Naive thymus-derived CD4-positive, alpha-beta T cell (primary cell): ENCODE measurements at regions of chr12 and their contacts with region 1.

Region 1: DNA sequence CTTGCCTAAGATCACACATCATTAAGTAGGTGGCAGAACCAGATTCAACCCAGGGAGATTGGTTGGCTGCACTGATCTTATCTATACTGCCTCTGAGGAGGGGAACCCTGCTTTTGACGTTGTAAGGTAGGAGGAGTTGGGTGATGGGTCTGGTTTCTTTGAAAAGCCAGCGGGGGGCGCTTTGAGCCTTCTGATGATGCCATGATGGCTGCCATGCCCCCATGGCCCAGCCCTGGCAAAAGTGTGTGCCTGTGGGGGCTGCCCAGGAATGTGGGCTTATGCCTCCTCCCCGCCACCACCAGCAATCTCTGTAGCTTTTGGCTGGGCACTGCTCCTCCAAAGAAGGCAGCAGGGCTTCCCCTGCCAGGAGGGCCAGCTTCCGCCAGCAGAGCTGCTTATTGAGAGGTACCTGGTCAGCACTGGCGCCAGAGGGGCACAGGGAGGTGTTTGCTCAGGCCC is 224.3 kb downstream of the SLC41A2 start:
- DNase-seq: no peak
- ATAC-seq: peak; percentile 58
- H3K4me3 ChIP-seq: no peak overlapping the region
- H3K4me3 Mint-ChIP-seq: no peak overlapping the region
- H3K27ac ChIP-seq: no peak overlapping the region
- H3K27ac Mint-ChIP-seq: peak overlapping the region in 2 of 9 donors; percentile 16 to 65
- H3K4me1 ChIP-seq: peaks cover 19 to 38% of the 10 kb centered on the region in 2 donors
- H3K4me1 Mint-ChIP-seq: peaks cover 45 to 71% (median 60%) of the 10 kb centered on the region in 7 donors
- H3K27me3 ChIP-seq: no peaks in the 10 kb centered on the region
- H3K27me3 Mint-ChIP-seq: no peaks in the 10 kb centered on the region

Region 2: GRCh38 chr12:104769144-104769561 is 35.4 kb after region 1 on chr12:
- CTCF ChIA-PET with region 1: no interaction called
- POLR2A ChIA-PET with region 1: no interaction called
- intact Hi-C with region 1: loop called in 1 of 2 experiments (anchors 2 kb)
- DNase-seq: no peak
- ATAC-seq: no peak
- H3K4me3 ChIP-seq: no peak overlapping the region
- H3K4me3 Mint-ChIP-seq: no peak overlapping the region
- H3K27ac ChIP-seq: no peak overlapping the region
- H3K27ac Mint-ChIP-seq: no peak overlapping the region
- H3K4me1 ChIP-seq: peaks cover 0 to 10% of the 10 kb centered on the region in 2 donors
- H3K4me1 Mint-ChIP-seq: peaks cover 13 to 17% (median 14%) of the 10 kb centered on the region in 7 donors
- H3K27me3 ChIP-seq: no peaks in the 10 kb centered on the region
- H3K27me3 Mint-ChIP-seq: peaks cover 0 to 7% (median 0%) of the 10 kb centered on the region in 5 donors